Left ventricle myocardium superior (tissue), 1 donor: ENCODE measurements at regions of chr5 and their contacts with region 1.

Region 1: DNA sequence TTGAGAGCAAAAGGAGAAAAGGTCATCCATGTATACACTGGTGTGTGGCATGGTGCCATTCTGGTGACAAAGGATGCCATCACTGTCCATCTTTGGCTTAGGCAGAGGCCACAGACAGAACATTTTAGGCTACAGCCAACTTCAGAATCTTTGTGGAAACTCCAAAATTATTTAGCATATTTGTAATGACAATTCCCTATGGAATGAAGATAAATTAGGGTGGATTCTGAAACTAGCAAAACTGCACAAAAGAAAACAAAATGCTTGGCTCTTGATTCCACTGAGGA is 92.5 kb downstream of the FBXW11 start:
- DNase-seq: no peak
- ATAC-seq: no peak

Region 2: DNA sequence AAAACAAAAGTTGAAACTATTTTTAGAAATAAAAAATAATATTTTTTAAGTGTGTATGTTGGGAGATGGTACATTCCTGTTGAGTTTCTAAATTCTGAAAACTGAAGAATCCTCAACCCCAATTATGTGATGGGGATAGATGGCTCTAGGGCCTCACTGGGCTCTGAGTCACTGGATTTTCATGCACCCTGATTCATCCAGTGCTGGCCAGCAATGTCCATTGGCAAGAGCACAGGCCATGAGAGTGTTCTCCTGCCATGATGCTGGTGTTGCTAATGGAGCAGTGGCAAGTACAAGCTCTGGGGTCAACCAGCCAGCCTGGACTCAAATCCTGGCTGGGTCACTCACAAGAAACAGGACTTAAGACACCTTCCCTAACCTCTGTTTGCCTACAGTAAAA is 105.0 kb before region 1 on chr5:
- intact Hi-C with region 1: no loop called
- DNase-seq: no peak
- ATAC-seq: no peak

Region 3: DNA sequence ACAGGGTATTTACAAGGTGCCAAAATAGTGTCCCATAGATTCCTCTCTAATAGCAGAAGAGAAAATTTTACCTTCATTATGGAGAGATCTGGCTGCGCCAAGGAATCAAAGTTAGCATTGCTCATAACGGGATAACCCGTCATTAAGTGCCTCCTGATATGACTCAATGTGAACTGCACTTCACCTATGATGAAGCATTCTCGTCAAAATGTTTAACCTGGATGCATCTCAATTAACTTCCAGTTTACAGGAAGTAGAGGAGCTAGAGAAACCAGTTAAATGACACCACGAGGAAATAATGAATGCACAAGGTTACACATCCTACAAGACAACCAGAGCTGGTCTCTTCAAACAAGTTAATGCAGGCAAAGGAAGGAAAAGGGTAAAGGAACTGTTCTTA is 75.3 kb after region 1 on chr5:
- intact Hi-C with region 1: no loop called
- DNase-seq: no peak
- ATAC-seq: no peak

Region 4: GRCh38 chr5:172006321-172007174 is 92.6 kb after region 1 on chr5 and contains the start of gene FBXW11:
- intact Hi-C with region 1: loop called (anchors 10 kb)
- DNase-seq: peak; percentile 97
- ATAC-seq: peak; percentile 94
- total RNA-seq, gene FBXW11: 69.0 TPM

Region 5: DNA sequence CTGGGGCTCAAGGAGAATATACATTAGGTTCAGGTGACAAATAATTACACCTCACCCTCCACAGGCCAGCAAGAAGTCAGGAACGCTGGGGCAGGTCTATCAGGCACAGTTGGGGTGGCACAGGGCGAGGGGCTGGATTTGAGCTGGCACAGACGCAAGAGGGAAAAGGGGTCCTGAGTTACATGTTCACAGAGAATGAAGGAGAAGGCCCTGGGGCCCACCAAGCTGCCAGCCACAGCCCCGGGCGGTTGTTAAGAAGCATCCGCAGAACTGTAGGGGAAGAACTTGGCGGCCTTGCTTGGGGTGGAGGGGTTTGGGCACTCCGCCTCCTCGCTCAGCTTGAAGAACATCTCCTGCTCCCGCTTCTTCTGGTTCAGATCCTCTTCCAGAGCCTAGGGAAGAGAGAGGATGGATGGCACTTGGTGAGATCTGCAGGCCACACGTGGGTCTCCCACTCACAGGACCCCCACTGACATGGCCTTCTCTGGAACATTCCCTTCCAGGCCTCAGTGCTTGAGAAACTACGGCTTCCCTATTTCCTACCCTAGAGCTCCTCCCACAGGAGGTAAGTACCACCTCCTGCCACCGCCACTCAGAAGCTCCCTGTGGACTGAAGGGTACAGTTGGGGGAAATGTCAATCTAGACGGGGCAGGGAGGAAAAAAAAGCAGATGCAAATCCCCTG is 130.8 kb after region 1 on chr5:
- intact Hi-C with region 1: loop called (anchors 10 kb)
- DNase-seq: no peak
- ATAC-seq: no peak